ENCODE measurements at regions of chr17 and their contacts with region 1.

Region 1: GRCh38 chr17:29931231-29931932 is 1.4 kb upstream of the SSH2 start:
- DNase-seq: peak; percentile 42 to 90 (median 58)
- ATAC-seq: peak; percentile 68
- H3K4me3 ChIP-seq: peak overlapping the region; percentile 92
- H3K4me3 Mint-ChIP-seq: no peak overlapping the region
- H3K27ac ChIP-seq: no peak overlapping the region
- H3K27ac Mint-ChIP-seq: no peak overlapping the region
- H3K4me1 ChIP-seq: peaks cover 18% of the 10 kb centered on the region
- H3K4me1 Mint-ChIP-seq: peaks cover 30% of the 10 kb centered on the region
- H3K27me3 ChIP-seq: no peaks in the 10 kb centered on the region
- H3K27me3 Mint-ChIP-seq: no peaks in the 10 kb centered on the region
- CTCF ChIP-seq: peak; percentile 87

Region 2: DNA sequence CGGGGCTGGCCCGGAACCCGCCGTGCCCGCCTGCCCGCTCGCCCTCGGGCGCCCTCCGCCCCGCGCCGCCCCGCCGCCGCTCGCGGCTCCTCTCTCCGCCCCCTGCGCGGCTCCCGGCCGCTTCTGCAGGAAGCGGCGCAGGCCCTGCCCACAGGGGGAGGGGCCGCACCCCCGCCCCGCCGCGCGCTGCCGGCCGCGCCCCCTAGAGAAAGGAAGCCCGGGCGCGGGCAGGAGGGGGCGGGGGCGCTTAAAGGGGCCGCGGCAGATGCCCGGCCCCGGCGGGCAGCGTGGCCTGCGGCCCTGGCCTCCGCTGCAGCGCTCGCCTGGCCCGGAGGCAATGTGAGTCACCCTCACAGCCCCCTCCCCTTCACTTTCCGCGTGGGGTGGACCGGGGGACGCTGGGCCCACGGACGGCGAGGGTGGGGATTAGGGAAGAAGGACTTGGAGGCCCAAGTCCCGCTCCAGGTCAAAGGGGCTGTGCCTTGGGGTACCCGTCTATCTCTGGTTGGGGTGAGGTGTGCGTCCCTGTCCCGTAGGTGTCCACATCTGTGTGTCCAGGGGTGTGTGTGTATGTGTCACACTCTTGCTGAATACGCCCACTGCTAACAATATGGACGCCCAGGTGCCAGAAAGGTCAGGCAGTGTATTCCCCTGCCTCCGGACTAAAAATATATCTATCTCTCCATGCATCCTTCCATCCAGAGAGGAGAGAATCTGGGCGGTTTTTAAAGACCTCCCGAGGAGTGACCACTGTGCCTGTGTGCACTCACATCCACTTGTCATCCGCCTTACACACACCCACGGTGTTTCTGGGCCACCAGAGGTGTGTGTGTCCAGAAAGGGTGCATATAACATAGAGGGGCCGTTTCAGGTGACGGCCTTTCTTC is 341.6 kb before region 1 on chr17 and contains the start of gene GIT1:
- CTCF ChIA-PET with region 1: no interaction called
- POLR2A ChIA-PET with region 1: interaction called, 3 read pairs
- intact Hi-C with region 1: loop called (anchors 2 to 5 kb)
- DNase-seq: peak; percentile 65 to 94 (median 81)
- ATAC-seq: peak; percentile 83
- H3K4me3 ChIP-seq: peak within 1 kb of the TSS; percentile 84
- H3K4me3 Mint-ChIP-seq: peak within 1 kb of the TSS; percentile 98
- H3K27ac ChIP-seq: peak within 1 kb of the TSS; percentile 60 to 64
- H3K27ac Mint-ChIP-seq: peak within 1 kb of the TSS; percentile 86
- H3K4me1 ChIP-seq: peaks cover 84% of the 10 kb centered on the region
- H3K4me1 Mint-ChIP-seq: peaks cover 71% of the 10 kb centered on the region
- H3K27me3 ChIP-seq: no peaks in the 10 kb centered on the region
- H3K27me3 Mint-ChIP-seq: no peaks in the 10 kb centered on the region
- CTCF ChIP-seq: no peak
- total RNA-seq, gene GIT1: 35.8 to 36.7 TPM

Region 3: GRCh38 chr17:29705386-29705785 is 226.0 kb before region 1 on chr17:
- CTCF ChIA-PET with region 1: interaction called, 10 read pairs
- POLR2A ChIA-PET with region 1: interaction called, 4 read pairs
- intact Hi-C with region 1: no loop called
- DNase-seq: peak in 3 of 14 experiments; percentile 43 to 63 (median 50)
- ATAC-seq: no peak
- H3K4me3 ChIP-seq: peak overlapping the region; percentile 46
- H3K4me3 Mint-ChIP-seq: peak overlapping the region; percentile 71
- H3K27ac ChIP-seq: peak overlapping the region; percentile 81 to 91
- H3K27ac Mint-ChIP-seq: peak overlapping the region; percentile 92
- H3K4me1 ChIP-seq: peaks cover 37% of the 10 kb centered on the region
- H3K4me1 Mint-ChIP-seq: peaks cover 61% of the 10 kb centered on the region
- H3K27me3 ChIP-seq: no peaks in the 10 kb centered on the region
- H3K27me3 Mint-ChIP-seq: no peaks in the 10 kb centered on the region
- CTCF ChIP-seq: no peak

Region 4: DNA sequence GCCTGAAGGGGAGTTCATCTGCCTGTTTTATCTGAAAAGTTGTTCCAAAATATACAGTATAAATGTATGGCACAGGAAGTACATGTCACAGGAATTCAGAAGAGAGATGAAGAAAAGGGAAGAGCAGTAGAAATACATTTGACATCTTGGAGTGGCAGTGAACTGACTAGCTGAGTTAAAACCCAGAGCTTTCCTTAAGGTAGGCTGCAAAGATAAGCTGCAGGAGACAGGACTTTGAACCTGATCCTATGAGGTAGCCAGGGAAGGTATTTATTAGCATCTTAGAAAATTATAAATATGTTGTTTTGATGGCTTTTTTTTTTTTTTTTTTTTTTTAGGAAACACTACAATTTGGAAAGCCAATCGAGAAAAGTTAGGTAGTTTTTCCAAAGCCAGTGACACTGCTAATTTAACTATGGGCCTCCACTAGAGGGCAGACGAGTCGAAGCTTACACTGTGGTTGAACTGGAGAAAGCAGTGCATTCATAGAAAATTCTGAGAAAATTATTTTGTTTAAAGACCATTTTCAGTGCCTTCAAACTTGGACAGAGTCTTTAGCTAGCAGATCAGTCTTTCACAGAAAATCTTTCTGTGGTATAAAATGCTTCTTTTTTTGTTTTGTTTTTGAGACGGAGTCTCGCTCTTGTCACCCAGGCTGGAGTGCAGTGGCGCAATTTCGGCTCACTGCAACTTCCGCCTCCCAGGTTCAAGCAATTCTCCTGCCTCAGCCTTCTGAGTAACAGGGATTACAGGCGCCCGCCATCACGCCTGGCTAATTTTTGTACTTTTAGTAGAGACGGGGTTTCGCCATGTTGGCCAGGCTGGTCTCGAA is 123.6 kb before region 1 on chr17:
- CTCF ChIA-PET with region 1: interaction called, 148 read pairs
- POLR2A ChIA-PET with region 1: interaction called, 123 read pairs
- intact Hi-C with region 1: loop called (anchors 1 kb)
- DNase-seq: peak; percentile 49 to 82 (median 60)
- ATAC-seq: peak; percentile 84
- H3K4me3 ChIP-seq: no peak overlapping the region
- H3K4me3 Mint-ChIP-seq: no peak overlapping the region
- H3K27ac ChIP-seq: no peak overlapping the region
- H3K27ac Mint-ChIP-seq: no peak overlapping the region
- H3K4me1 ChIP-seq: peaks cover 8% of the 10 kb centered on the region
- H3K4me1 Mint-ChIP-seq: peaks cover 35% of the 10 kb centered on the region
- H3K27me3 ChIP-seq: no peaks in the 10 kb centered on the region
- H3K27me3 Mint-ChIP-seq: no peaks in the 10 kb centered on the region
- CTCF ChIP-seq: peak; percentile 97

Region 5: GRCh38 chr17:29918922-29919856 is 12.2 kb before region 1 on chr17:
- CTCF ChIA-PET with region 1: interaction called, 15 read pairs
- POLR2A ChIA-PET with region 1: interaction called, 11 read pairs
- intact Hi-C with region 1: no loop called
- DNase-seq: no peak
- ATAC-seq: no peak
- H3K4me3 ChIP-seq: no peak overlapping the region
- H3K4me3 Mint-ChIP-seq: no peak overlapping the region
- H3K27ac ChIP-seq: no peak overlapping the region
- H3K27ac Mint-ChIP-seq: no peak overlapping the region
- H3K4me1 ChIP-seq: peaks cover 3% of the 10 kb centered on the region
- H3K4me1 Mint-ChIP-seq: peaks cover 47% of the 10 kb centered on the region
- H3K27me3 ChIP-seq: no peaks in the 10 kb centered on the region
- H3K27me3 Mint-ChIP-seq: no peaks in the 10 kb centered on the region
- CTCF ChIP-seq: no peak

Region 6: DNA sequence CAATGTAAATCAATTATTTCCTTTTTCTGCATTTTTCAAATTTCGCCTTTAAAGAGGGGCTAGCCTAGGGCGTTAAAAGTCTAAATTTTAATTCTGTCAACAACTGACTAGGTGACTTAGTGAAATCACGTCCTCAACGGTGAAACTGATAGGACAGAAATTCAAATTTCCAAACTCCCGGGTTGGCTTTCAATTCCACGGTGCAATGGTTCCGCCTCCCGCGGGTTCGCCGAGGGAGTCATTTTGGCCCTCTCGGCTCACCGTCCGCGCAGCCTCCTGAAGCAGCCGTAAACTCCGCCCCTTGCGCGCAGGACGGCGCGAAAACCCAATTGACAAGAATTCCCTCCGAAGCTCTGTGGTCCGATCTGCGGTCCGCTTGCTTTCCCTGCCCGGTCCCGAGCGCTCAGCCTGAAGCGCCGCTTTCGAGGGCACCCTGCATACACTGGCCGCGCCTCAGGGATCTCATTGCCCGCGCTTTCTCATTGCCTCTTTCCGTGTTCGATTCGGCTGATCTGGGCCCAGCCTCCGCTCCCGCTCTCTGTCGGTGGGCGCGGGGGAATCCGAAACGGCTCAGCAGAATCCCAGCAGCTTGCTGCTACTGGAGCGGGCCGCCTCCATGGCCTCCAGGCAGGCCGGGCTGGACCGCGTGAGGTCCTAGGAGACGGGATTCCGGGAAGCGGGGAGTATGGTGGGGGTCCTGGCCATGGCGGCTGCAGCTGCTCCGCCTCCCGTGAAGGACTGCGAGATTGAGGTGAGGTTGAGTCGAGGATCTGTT is 900.5 kb after region 1 on chr17 and contains the start of gene ATAD5:
- CTCF ChIA-PET with region 1: no interaction called
- POLR2A ChIA-PET with region 1: no interaction called
- intact Hi-C with region 1: no loop called
- DNase-seq: peak; percentile 76 to 94 (median 83)
- ATAC-seq: peak; percentile 98
- H3K4me3 ChIP-seq: peak within 1 kb of the TSS; percentile 76
- H3K4me3 Mint-ChIP-seq: peak within 1 kb of the TSS; percentile 100
- H3K27ac ChIP-seq: peak within 1 kb of the TSS in 1 of 2 donors; percentile 9
- H3K27ac Mint-ChIP-seq: peak within 1 kb of the TSS; percentile 86
- H3K4me1 ChIP-seq: peaks cover 16% of the 10 kb centered on the region
- H3K4me1 Mint-ChIP-seq: peaks cover 30% of the 10 kb centered on the region
- H3K27me3 ChIP-seq: no peaks in the 10 kb centered on the region
- H3K27me3 Mint-ChIP-seq: no peaks in the 10 kb centered on the region
- CTCF ChIP-seq: no peak
- total RNA-seq, gene ATAD5: 3.6 to 3.9 TPM